IMR-90 (cell line): ENCODE measurements at regions of chr3 and their contacts with region 1.

Region 1: DNA sequence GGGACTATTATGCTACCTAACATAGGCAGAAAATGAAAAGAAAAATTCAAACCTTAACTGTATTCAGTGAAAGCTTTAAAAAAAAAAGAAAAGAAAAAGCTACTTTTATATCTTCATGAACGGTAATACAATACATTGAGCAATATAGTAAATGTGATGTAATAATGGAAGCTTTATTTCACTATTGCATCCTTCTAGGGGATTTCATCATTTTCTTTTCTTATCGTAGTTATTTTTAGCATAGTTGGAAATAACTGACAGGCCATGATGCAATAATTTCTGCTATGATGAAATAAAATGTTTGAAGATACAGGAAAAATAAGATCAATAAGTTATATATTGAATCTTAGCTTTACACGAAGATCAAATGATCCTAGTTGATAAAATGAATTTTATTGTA is 40.3 kb upstream of the ZCWPW2 start:
- DNase-seq: no peak
- ATAC-seq: no peak
- H3K4me3 ChIP-seq: no peak overlapping the region
- H3K27ac ChIP-seq: no peak overlapping the region
- H3K4me1 ChIP-seq: no peaks in the 10 kb centered on the region
- H3K27me3 ChIP-seq: no peaks in the 10 kb centered on the region
- CTCF ChIP-seq: no peak
- POLR2A ChIP-seq: no peak
- RAD21 ChIP-seq: no peak

Region 2: DNA sequence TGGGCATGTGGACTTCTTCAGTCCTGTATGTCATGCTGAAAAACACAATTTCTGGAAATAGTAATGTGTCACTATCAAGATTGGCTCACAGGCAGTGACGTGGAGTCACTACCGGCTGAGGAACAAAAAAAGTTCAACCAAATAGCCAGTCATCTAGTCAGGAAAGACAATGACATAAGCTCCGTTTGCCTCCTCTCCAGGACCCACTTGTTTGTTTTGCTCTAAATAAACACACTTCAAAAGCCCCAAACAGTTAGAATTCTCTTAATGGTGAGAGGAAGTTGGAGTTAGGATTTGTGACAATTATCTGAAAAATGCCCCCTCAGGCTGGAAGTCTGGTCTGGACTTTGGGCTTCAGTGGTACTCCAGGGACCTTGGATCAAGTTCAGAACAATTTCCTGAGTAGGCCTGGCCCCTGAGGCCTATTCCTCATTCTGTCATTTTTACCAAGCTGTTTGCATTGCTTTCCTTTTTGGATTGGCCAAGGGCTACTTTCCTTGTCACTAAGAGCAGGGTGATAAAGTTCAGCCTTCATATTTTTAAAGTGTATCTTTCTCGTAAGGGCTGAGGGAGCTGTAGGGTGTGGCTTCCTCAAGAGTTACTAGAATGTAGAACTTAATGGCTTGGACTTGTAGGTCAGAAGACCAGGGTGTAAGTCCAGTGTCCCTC is 685.0 kb before region 1 on chr3:
- CTCF ChIA-PET with region 1: no interaction called
- POLR2A ChIA-PET with region 1: no interaction called
- dilution Hi-C with region 1: no loop called
- in situ Hi-C with region 1: no loop called
- intact Hi-C with region 1: no loop called
- DNase-seq: peak; percentile 28
- ATAC-seq: peak; percentile 36
- H3K4me3 ChIP-seq: no peak overlapping the region
- H3K27ac ChIP-seq: no peak overlapping the region
- H3K4me1 ChIP-seq: peaks cover 2% of the 10 kb centered on the region; the same call in 1 of the 2 replicates
- H3K27me3 ChIP-seq: no peaks in the 10 kb centered on the region
- CTCF ChIP-seq: no peak
- POLR2A ChIP-seq: no peak
- RAD21 ChIP-seq: no peak

Region 3: DNA sequence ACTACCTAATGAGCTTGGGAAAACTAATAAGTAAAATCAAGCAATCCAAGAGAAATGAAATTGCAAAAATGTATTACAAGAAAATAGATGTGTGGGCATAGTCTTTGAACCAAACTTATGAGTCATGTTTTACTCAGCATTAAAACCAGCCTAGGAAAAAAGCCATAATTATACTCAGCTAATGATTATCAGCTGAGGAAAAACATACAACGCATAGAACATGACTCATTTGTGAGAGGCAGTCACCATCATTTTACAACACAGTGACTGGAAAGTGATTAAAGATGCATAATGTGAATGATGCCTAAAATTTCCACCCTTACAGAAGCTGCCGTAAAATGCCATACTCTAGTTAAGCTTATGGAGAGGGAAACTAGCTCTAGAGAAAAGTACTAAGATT is 348.1 kb before region 1 on chr3:
- CTCF ChIA-PET with region 1: no interaction called
- POLR2A ChIA-PET with region 1: interaction called, 11 read pairs
- dilution Hi-C with region 1: no loop called
- in situ Hi-C with region 1: no loop called
- intact Hi-C with region 1: no loop called
- DNase-seq: peak; percentile 1
- ATAC-seq: no peak
- H3K4me3 ChIP-seq: no peak overlapping the region
- H3K27ac ChIP-seq: no peak overlapping the region
- H3K4me1 ChIP-seq: no peaks in the 10 kb centered on the region
- H3K27me3 ChIP-seq: no peaks in the 10 kb centered on the region
- CTCF ChIP-seq: no peak
- POLR2A ChIP-seq: no peak
- RAD21 ChIP-seq: no peak

Region 4: DNA sequence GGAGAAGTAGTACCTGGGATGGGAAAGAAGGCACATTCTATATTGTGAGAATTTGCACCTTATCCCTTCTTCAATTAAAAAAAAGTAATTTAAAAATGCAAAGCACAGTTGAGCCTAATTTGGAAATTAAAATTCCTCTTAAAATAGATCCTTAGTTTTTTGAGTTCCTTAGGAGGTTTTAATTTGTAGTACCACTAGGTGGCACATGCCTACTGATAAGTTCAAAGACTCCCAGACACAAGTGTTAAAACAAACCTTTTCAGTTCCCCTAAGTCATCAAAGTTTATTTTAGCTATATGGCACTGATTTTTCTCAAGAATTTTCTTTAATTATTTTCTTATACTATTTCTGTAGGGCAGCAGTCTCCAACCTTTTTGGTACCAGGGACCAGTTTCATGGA is 168.0 kb after region 1 on chr3:
- CTCF ChIA-PET with region 1: no interaction called
- POLR2A ChIA-PET with region 1: no interaction called
- dilution Hi-C with region 1: no loop called
- in situ Hi-C with region 1: no loop called
- intact Hi-C with region 1: no loop called
- DNase-seq: peak; percentile 57
- ATAC-seq: peak; percentile 56; the same call in 1 of the 2 replicates
- H3K4me3 ChIP-seq: no peak overlapping the region
- H3K27ac ChIP-seq: no peak overlapping the region
- H3K4me1 ChIP-seq: no peaks in the 10 kb centered on the region
- H3K27me3 ChIP-seq: no peaks in the 10 kb centered on the region
- CTCF ChIP-seq: peak; percentile 59
- POLR2A ChIP-seq: no peak
- RAD21 ChIP-seq: peak; percentile 45